K562 (cell line): ENCODE measurements at regions of chr5 and their contacts with region 1.

Region 1: DNA sequence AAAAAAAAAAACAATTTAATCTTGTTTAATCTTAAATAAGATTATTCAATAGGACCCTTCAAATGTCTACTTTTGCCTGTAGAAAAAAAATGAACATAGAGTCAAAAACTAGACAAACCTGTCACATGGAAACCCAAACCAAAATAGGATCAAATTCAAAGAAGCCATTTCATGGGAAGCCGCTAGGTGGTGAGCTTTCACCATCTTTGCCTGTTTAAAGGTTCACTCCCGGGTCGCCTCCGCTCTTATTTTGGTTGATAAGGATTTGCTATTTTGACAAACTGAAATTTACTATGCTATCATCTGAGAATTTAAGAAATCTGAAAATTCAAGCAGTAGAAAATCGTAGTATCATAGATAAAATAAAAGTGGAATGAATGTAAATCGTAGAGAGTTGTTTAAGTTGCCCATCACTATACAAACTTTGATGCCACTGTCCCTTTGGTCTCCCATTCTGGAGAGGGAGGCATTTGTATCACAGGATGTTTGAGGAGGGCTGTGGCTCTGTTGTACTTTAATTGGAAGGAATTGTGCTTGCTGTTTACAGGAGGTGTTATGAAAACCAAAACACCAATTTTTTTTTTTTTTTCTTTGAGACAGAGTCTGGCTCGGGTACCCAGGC is 43.5 kb upstream of the DNAH5 start:
- DNase-seq: peak; percentile 66 to 78 (median 74)
- ATAC-seq: peak; percentile 85
- H3K4me3 ChIP-seq: no peak overlapping the region
- H3K27ac ChIP-seq: no peak overlapping the region
- H3K4me1 ChIP-seq: no peaks in the 10 kb centered on the region
- H3K27me3 ChIP-seq: peaks cover 0 to 4% of the 10 kb centered on the region in 2 experiments; a peak in 1 of 5 replicates
- CTCF ChIP-seq: peak; percentile 70 to 95 (median 77)
- EP300 ChIP-seq: no peak
- POLR2A ChIP-seq: no peak
- RAD21 ChIP-seq: peak; percentile 78 to 91

Region 2: DNA sequence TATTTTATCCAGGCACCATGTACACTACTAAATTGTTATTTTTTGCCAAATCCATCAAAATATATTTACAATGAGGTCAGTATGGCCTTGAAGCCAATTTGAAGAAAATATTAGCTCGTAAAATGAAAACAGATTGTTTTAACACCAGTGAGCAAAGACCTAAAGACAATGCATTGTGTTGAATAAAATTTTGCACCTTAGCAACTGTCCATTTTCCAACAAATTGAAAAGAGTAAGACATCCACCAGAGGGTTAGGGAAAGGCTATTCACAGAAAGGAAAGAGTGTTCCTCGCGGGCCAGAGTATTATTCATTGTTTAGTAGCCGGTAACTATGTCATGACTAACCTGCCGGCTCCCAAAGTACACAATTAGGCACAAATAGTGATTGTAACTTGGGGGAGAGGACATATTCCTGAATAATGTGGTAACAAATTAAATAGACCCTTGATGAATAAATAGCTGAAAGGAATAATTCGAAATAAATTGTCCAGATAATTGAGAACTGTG is 256.8 kb before region 1 on chr5:
- CTCF ChIA-PET with region 1: no interaction called
- POLR2A ChIA-PET with region 1: no interaction called
- in situ Hi-C with region 1: no loop called
- intact Hi-C with region 1: no loop called
- DNase-seq: no peak
- ATAC-seq: no peak
- H3K4me3 ChIP-seq: no peak overlapping the region
- H3K27ac ChIP-seq: no peak overlapping the region
- H3K4me1 ChIP-seq: no peaks in the 10 kb centered on the region
- H3K27me3 ChIP-seq: no peaks in the 10 kb centered on the region
- CTCF ChIP-seq: no peak
- EP300 ChIP-seq: no peak
- POLR2A ChIP-seq: no peak
- RAD21 ChIP-seq: no peak

Region 3: GRCh38 chr5:14270209-14270702 is 282.3 kb after region 1 on chr5:
- CTCF ChIA-PET with region 1: no interaction called
- POLR2A ChIA-PET with region 1: no interaction called
- in situ Hi-C with region 1: no loop called
- intact Hi-C with region 1: loop called (anchors 1 kb)
- DNase-seq: peak; percentile 49 to 67 (median 58)
- ATAC-seq: peak; percentile 67
- H3K4me3 ChIP-seq: no peak overlapping the region
- H3K27ac ChIP-seq: no peak overlapping the region
- H3K4me1 ChIP-seq: peaks cover 13 to 32% of the 10 kb centered on the region in 2 experiments; a peak in 3 of 5 replicates
- H3K27me3 ChIP-seq: no peaks in the 10 kb centered on the region
- CTCF ChIP-seq: peak; percentile 66 to 84 (median 77)
- EP300 ChIP-seq: no peak
- POLR2A ChIP-seq: no peak
- RAD21 ChIP-seq: peak; percentile 46 to 67; a peak in 3 of 4 replicates

Region 4: GRCh38 chr5:14364576-14365472 is 376.9 kb after region 1 on chr5:
- CTCF ChIA-PET with region 1: interaction called, 17 read pairs
- POLR2A ChIA-PET with region 1: no interaction called
- in situ Hi-C with region 1: no loop called
- intact Hi-C with region 1: loop called (anchors 1 kb)
- DNase-seq: peak; percentile 32 to 62 (median 57)
- ATAC-seq: peak; percentile 87
- H3K4me3 ChIP-seq: no peak overlapping the region
- H3K27ac ChIP-seq: no peak overlapping the region
- H3K4me1 ChIP-seq: no peaks in the 10 kb centered on the region
- H3K27me3 ChIP-seq: peaks cover 1 to 28% of the 10 kb centered on the region in 2 experiments; a peak in 4 of 5 replicates
- CTCF ChIP-seq: peak; percentile 71 to 87 (median 72)
- EP300 ChIP-seq: no peak
- POLR2A ChIP-seq: no peak
- RAD21 ChIP-seq: peak; percentile 3 to 53; a peak in 2 of 4 replicates

Region 5: DNA sequence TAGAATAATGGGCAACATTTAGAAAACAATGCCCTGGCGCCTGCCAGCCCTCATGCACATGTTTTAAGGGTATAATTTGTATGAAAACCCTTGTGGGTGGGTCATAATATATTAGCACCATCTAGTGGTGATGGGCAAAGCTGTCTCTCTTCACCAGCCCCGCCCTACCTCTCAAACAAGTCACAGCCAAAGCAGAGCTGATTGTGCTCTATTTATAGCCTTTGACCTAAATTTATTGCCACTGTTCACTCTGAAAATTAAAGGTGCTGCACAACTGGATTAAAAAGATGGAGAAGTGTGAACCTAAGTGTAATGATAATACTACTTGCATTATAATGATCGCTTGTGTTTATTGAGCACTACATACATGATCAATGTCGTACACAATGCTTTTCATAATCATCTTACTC is 1015.6 kb after region 1 on chr5:
- CTCF ChIA-PET with region 1: interaction called, 7 read pairs
- POLR2A ChIA-PET with region 1: no interaction called
- in situ Hi-C with region 1: loop called (anchors 25 kb)
- intact Hi-C with region 1: no loop called
- DNase-seq: peak; percentile 68 to 80 (median 74)
- ATAC-seq: peak; percentile 98
- H3K4me3 ChIP-seq: no peak overlapping the region
- H3K27ac ChIP-seq: no peak overlapping the region
- H3K4me1 ChIP-seq: no peaks in the 10 kb centered on the region
- H3K27me3 ChIP-seq: peaks cover 0 to 4% of the 10 kb centered on the region in 2 experiments; a peak in 1 of 5 replicates
- CTCF ChIP-seq: peak; percentile 74 to 91 (median 81)
- EP300 ChIP-seq: no peak
- POLR2A ChIP-seq: no peak
- RAD21 ChIP-seq: peak; percentile 86 to 91